ENCODE measurements at regions of chr5 and their contacts with region 1.

Region 1: DNA sequence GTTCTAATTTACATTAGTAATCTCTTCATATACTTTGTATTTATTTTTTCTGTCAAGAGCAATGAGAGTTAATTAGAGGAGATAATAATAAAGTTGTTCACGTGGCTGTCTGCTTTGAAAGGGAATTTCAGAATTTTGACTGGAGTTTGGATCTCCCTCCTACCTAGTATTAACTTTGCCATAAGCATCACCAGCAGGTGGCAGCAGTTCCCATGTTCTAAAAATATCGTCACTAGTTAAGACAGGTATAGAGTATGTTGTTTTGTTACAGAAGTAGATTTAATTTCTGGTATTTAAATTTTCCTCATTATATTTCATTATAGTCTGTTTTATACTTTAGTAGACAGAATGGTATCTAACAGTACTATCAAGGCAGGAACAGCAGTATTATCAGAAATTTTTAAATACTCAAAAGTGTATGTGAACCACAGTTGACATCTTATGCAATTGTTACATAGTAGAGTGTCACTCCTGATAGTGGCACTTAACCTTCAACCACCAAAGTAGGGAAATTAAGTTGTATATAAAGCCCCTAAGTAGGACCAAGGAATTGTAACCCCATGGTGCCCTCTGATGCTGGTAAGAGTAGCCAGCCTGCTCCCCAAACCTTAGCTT is 20.4 kb downstream of the GNPDA1 start:
- DNase-seq: peak; percentile 51 to 76
- ATAC-seq: peak; percentile 61 to 85 (median 79)
- H3K4me3 ChIP-seq: no peak overlapping the region
- H3K27ac ChIP-seq: no peak overlapping the region
- H3K4me1 ChIP-seq: peaks cover 0 to 24% (median 7%) of the 10 kb centered on the region in 9 donors
- H3K27me3 ChIP-seq: no peaks in the 10 kb centered on the region
- CTCF ChIP-seq: peak; percentile 63 to 89 (median 81)

Region 2: DNA sequence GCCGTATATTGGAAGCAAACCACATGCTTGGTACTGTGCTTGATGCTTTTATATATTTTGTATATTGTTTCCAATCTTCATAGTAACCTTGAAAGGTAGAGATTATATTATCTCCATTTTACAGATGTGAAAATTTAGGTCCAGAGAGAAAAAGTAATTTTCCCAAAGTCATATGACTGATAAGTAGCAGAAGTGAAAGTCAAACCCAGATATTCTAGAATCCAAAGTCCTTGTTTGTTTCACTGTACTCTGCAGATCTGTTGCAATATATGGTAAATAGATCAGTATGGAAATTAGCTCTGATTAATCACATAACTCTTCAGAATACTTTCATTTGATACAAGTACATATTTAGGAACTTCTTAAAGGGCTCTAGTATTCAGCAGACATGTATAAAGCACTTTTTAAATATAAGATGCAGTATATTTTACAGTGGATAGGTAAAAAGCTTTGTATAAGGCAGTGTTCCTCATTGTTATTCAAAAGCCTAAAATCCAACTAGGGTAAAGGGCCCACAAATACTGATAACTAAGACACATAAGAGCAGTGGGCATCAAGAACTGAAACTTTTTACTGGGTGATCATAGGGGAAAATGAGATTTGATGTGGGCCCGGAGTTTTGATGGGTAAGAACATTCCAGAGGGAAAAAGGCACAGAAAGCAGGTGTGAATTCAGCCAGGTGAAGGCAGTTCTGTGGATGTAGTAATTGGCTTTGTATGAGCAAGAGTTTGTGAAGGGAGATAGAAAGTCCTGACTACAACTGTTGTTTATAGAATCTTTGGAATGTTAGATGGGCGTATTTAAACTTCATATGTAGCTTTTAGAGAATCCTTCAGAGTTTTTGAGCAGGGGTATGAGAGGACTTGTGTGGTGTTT is 141.1 kb after region 1 on chr5:
- intact Hi-C with region 1: loop called in 1 of 10 experiments (anchors 5 kb)
- DNase-seq: no peak
- ATAC-seq: no peak
- H3K4me3 ChIP-seq: no peak overlapping the region
- H3K27ac ChIP-seq: peak overlapping the region in 1 of 10 donors; percentile 34
- H3K4me1 ChIP-seq: peaks cover 0 to 31% (median 11%) of the 10 kb centered on the region in 9 donors
- H3K27me3 ChIP-seq: no peaks in the 10 kb centered on the region
- CTCF ChIP-seq: no peak

Region 3: GRCh38 chr5:142145106-142145900 is 152.8 kb after region 1 on chr5:
- intact Hi-C with region 1: loop called in 9 of 10 experiments (anchors 1 to 5 kb)
- DNase-seq: peak in 1 of 2 donors; percentile 80
- ATAC-seq: peak; percentile 71 to 91 (median 84)
- H3K4me3 ChIP-seq: no peak overlapping the region
- H3K27ac ChIP-seq: no peak overlapping the region
- H3K4me1 ChIP-seq: peaks cover 0 to 8% (median 0%) of the 10 kb centered on the region in 9 donors
- H3K27me3 ChIP-seq: no peaks in the 10 kb centered on the region
- CTCF ChIP-seq: peak; percentile 59 to 80 (median 72)

Region 4: DNA sequence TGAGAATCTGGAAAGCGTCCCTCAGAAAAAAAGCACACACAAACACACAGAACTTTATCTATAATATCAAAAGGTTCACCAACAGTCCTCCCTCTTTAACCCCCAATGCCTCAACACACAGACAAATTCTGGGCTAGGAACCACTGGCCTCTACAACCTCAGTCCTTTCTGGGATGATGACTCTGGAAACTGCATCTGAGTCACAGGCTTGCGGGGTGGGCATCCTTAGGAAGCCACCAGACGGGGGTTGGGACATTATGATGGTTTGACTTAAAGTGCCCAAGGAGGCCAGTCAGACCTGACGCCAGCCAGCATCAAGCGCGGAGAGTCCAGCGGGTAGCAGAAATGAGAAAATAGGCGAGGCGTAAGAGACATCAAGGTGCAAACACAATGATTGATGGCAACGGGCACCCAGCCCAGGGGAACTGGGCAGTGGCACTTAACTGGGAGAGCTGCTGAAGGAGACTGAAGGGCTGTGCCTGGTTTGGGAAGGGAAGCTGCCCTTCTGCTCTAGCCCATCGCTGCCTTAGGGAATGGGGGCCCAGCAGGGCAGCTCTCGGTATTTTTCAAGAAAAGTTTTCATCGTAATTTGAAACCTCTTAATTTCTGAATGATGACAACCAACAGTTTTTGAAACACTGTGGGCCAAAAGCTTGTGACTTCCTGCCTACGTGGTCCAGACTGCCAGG is 311.7 kb after region 1 on chr5:
- intact Hi-C with region 1: loop called in 1 of 10 experiments (anchors 10 kb)
- DNase-seq: peak; percentile 35 to 37
- ATAC-seq: peak; percentile 36 to 78 (median 68)
- H3K4me3 ChIP-seq: no peak overlapping the region
- H3K27ac ChIP-seq: no peak overlapping the region
- H3K4me1 ChIP-seq: peaks cover 0 to 14% (median 10%) of the 10 kb centered on the region in 9 donors
- H3K27me3 ChIP-seq: no peaks in the 10 kb centered on the region
- CTCF ChIP-seq: no peak

Region 5: DNA sequence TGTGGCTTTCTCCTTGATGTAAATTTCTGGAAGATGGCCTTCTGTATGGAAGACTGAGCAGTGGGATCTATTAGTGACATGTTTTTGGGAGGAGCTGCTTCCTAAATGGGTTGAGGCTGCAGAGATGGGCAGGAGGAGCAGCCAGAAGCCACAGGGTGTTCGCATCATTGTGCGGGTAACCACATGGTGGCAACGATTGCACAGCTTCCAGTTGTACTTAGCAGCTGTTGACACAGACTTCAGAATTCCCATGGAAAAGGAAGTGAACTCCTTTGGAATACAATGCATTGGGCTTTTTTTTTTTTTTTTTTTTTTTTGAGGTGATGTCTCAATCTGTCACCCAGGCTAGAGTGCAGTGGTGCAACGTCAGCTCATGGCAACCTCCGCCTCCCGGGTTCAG is 1113.7 kb after region 1 on chr5:
- intact Hi-C with region 1: no loop called
- DNase-seq: peak; percentile 20 to 51
- ATAC-seq: peak; percentile 67 to 86 (median 77)
- H3K4me3 ChIP-seq: no peak overlapping the region
- H3K27ac ChIP-seq: peak overlapping the region in 1 of 10 donors; percentile 19
- H3K4me1 ChIP-seq: peaks cover 0 to 77% (median 61%) of the 10 kb centered on the region in 9 donors
- H3K27me3 ChIP-seq: no peaks in the 10 kb centered on the region
- CTCF ChIP-seq: peak in 7 of 9 donors; percentile 27 to 60 (median 35)

Measured in heart right ventricle (tissue), 16 donors.